ENCODE measurements at regions of chr5 and their contacts with region 1.

Region 1: DNA sequence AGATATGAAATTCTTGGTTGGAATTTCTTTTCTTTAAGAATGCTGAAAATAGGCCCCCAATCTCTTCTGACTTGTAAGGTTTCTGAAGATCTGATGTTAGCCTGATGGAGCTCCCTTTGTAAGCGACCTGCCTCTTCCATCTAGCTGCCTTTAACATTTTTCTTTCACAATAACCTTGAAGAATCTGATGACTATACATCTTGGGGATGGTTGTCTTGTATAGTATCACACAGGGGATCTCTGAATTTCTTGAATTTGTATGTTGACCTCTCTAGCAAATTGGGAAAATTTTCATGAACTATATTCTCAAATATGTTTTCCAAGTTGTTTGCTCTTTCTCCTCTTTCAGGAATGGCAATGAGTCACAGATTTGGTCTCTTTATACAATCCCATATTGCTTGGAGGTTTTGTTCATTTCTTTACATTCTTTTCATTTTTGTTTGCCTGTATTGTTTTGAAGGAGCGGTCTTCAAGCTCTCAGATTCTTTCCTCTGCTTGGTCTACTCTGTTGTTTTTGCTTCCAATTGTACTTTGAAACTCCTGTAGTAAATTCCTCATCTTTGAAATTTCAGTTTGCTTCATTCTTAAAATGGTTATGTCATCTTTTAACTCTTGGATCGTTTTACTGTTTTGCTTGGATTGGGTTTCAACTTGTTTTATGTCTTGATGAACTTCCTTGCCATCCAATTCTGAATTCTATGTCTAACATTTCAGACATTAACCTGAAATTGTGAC is 245.2 kb upstream of the TARS1 start:
- DNase-seq: no peak
- ATAC-seq: no peak
- H3K4me3 ChIP-seq: no peak overlapping the region
- H3K27ac ChIP-seq: no peak overlapping the region
- H3K4me1 ChIP-seq: no peaks in the 10 kb centered on the region
- H3K27me3 ChIP-seq: no peaks in the 10 kb centered on the region
- CTCF ChIP-seq: no peak

Region 2: GRCh38 chr5:33105521-33105941 is 90.1 kb before region 1 on chr5:
- intact Hi-C with region 1: no loop called
- DNase-seq: no peak
- ATAC-seq: peak in 5 of 8 donors; percentile 22 to 75 (median 41)
- H3K4me3 ChIP-seq: no peak overlapping the region
- H3K27ac ChIP-seq: no peak overlapping the region
- H3K4me1 ChIP-seq: no peaks in the 10 kb centered on the region
- H3K27me3 ChIP-seq: no peaks in the 10 kb centered on the region
- CTCF ChIP-seq: no peak

Region 3: GRCh38 chr5:33975852-33976251 is 780.3 kb after region 1 on chr5:
- intact Hi-C with region 1: loop called in 1 of 10 experiments (anchors 5 kb)
- DNase-seq: no peak
- ATAC-seq: peak in 3 of 8 donors; percentile 35 to 42 (median 41)
- H3K4me3 ChIP-seq: no peak overlapping the region
- H3K27ac ChIP-seq: peak overlapping the region in 4 of 10 donors; percentile 14 to 41 (median 30)
- H3K4me1 ChIP-seq: peaks cover 0 to 17% (median 0%) of the 10 kb centered on the region in 9 donors
- H3K27me3 ChIP-seq: no peaks in the 10 kb centered on the region
- CTCF ChIP-seq: no peak